Activated CD4-positive, alpha-beta T cell treated with anti-CD3 and anti-CD28 coated beads for 36 hours (primary cell): ENCODE measurements at regions of chr9 and their contacts with region 1.

Region 1: GRCh38 chr9:89919169-89919681 is 314.4 kb downstream of the GADD45G start:
- DNase-seq: peak; percentile 62
- ATAC-seq: peak; percentile 81
- H3K4me3 Mint-ChIP-seq: no peak overlapping the region
- H3K27ac Mint-ChIP-seq: peak overlapping the region; percentile 59
- H3K4me1 Mint-ChIP-seq: peaks cover 14% of the 10 kb centered on the region
- H3K27me3 Mint-ChIP-seq: peaks cover 10% of the 10 kb centered on the region

Region 2: GRCh38 chr9:89902450-89903145 is 16.6 kb before region 1 on chr9:
- CTCF ChIA-PET with region 1: no interaction called
- POLR2A ChIA-PET with region 1: no interaction called
- intact Hi-C with region 1: no loop called
- DNase-seq: no peak
- ATAC-seq: no peak
- H3K4me3 Mint-ChIP-seq: no peak overlapping the region
- H3K27ac Mint-ChIP-seq: no peak overlapping the region
- H3K4me1 Mint-ChIP-seq: no peaks in the 10 kb centered on the region
- H3K27me3 Mint-ChIP-seq: peaks cover 11% of the 10 kb centered on the region

Region 3: DNA sequence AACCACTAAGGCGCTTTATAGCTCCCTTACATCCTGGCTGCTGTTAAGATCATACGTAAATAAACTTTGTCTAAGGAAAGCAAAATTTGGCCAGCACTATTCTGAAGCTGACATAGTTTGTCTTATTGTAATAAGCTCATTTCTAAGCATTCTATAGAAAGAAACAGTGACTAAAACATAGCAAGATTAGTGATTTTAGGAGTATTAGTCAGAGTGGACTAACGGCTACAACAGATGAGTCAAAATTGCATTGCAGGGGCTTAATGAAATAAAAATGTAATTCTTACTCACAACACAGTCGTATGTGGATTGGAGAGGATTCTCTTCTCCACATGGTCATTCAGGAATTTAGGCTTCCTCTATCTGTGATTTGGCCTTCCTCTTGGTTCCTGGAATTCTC is 33.2 kb after region 1 on chr9:
- CTCF ChIA-PET with region 1: interaction called, 3 read pairs
- POLR2A ChIA-PET with region 1: no interaction called
- intact Hi-C with region 1: loop called in 1 of 2 experiments (anchors 2 kb)
- DNase-seq: no peak
- ATAC-seq: peak; percentile 66
- H3K4me3 Mint-ChIP-seq: no peak overlapping the region
- H3K27ac Mint-ChIP-seq: no peak overlapping the region
- H3K4me1 Mint-ChIP-seq: peaks cover 15% of the 10 kb centered on the region
- H3K27me3 Mint-ChIP-seq: peaks cover 6% of the 10 kb centered on the region

Region 4: DNA sequence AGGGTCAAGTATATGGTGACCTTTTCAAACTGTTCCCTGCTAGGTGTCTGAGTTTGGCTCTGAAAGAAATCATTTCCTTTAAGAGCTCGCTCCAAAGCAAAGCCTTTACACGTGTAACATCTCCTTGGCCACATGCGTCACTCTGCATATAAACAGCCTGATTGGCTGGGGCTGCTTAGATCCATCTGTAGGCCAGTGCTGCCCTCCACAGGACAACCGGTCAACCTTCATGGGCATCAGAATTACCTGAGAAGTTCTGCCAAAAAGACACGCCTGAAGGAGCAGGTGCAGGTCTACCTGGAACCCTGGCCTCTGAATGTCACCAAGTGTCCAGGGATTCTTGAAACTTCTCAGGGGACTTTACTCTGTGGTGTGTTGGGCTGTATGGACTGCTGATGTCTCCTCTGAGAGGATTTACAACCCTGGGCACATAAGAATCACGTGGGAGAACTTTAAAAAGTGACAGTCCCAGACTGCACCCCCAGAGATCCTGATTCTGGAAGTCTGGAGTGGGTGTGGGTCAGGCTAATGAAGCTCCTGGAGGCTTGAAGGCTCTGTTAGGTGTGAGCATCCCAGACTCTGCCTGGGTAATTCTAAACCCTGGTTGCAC is 183.2 kb after region 1 on chr9:
- CTCF ChIA-PET with region 1: interaction called, 9 read pairs
- POLR2A ChIA-PET with region 1: no interaction called
- intact Hi-C with region 1: loop called (anchors 1 to 5 kb)
- DNase-seq: peak; percentile 90
- ATAC-seq: peak; percentile 100
- H3K4me3 Mint-ChIP-seq: no peak overlapping the region
- H3K27ac Mint-ChIP-seq: no peak overlapping the region
- H3K4me1 Mint-ChIP-seq: peaks cover 3% of the 10 kb centered on the region
- H3K27me3 Mint-ChIP-seq: peaks cover 2% of the 10 kb centered on the region

Region 5: GRCh38 chr9:90365666-90366065 is 446.4 kb after region 1 on chr9:
- CTCF ChIA-PET with region 1: no interaction called
- POLR2A ChIA-PET with region 1: no interaction called
- intact Hi-C with region 1: no loop called
- DNase-seq: no peak
- ATAC-seq: no peak
- H3K4me3 Mint-ChIP-seq: no peak overlapping the region
- H3K27ac Mint-ChIP-seq: no peak overlapping the region
- H3K4me1 Mint-ChIP-seq: no peaks in the 10 kb centered on the region
- H3K27me3 Mint-ChIP-seq: peaks cover 22% of the 10 kb centered on the region

Region 6: GRCh38 chr9:90433398-90433941 is 514.2 kb after region 1 on chr9:
- CTCF ChIA-PET with region 1: no interaction called
- POLR2A ChIA-PET with region 1: no interaction called
- intact Hi-C with region 1: no loop called
- DNase-seq: no peak
- ATAC-seq: no peak
- H3K4me3 Mint-ChIP-seq: no peak overlapping the region
- H3K27ac Mint-ChIP-seq: no peak overlapping the region
- H3K4me1 Mint-ChIP-seq: no peaks in the 10 kb centered on the region
- H3K27me3 Mint-ChIP-seq: peaks cover 15% of the 10 kb centered on the region